GM12878 (cell line): ENCODE measurements at regions of chr15 and their contacts with region 1.

Region 1: DNA sequence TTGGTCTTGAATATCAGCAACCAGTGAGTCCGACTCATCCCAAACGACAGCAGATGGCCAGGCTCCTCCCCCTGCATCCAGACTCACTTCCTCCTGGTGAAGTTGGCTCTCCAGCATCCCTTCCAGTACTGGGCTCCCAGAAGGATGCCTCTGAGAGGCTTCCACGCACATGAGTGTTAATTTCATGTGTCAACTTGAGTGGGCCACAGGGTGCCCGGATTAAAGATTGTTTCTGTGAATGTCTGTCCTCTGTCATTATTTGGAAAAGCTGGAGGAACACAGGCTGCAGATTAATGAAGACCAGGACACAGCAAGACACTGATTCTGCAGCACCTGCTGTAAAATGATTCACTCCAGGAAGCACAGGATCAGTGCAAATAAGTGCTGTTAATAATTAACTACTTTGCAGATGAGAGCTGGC is 99.8 kb downstream of the ATP10A start:
- DNase-seq: no peak
- ATAC-seq: no peak
- H3K4me3 ChIP-seq: no peak overlapping the region
- H3K27ac ChIP-seq: no peak overlapping the region
- H3K4me1 ChIP-seq: no peaks in the 10 kb centered on the region
- H3K27me3 ChIP-seq: no peaks in the 10 kb centered on the region
- CTCF ChIP-seq: no peak
- EP300 ChIP-seq: no peak
- POLR2A ChIP-seq: no peak
- RAD21 ChIP-seq: no peak

Region 2: GRCh38 chr15:25616471-25616870 is 146.9 kb before region 1 on chr15:
- CTCF ChIA-PET with region 1: no interaction called
- POLR2A ChIA-PET with region 1: no interaction called
- RAD21 ChIA-PET with region 1: no interaction called
- SMC1A ChIA-PET with region 1: no interaction called
- in situ Hi-C with region 1: no loop called
- intact Hi-C with region 1: no loop called
- DNase-seq: no peak
- ATAC-seq: no peak
- H3K4me3 ChIP-seq: no peak overlapping the region
- H3K27ac ChIP-seq: no peak overlapping the region
- H3K4me1 ChIP-seq: no peaks in the 10 kb centered on the region
- H3K27me3 ChIP-seq: no peaks in the 10 kb centered on the region
- CTCF ChIP-seq: no peak
- EP300 ChIP-seq: no peak
- POLR2A ChIP-seq: no peak
- RAD21 ChIP-seq: no peak

Region 3: DNA sequence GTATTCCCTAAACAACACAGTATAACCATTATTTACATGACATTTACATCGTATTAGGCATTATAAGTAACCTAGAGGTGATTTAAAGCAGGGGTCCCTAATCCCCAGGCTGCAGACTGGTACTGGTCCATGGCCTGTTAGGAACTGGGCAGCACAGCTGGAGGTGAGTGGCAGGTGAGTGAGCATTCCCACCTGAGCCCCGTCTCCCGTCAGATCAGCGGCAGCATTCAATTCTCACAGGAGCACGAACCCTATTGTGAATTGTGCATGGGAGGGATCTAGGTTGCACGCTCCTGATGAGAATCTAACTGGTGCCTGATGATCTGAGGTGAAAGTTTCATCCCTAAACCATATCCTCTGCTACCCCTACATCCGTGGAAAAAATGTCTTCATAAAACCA is 38.4 kb before region 1 on chr15:
- CTCF ChIA-PET with region 1: no interaction called
- POLR2A ChIA-PET with region 1: no interaction called
- RAD21 ChIA-PET with region 1: no interaction called
- SMC1A ChIA-PET with region 1: no interaction called
- in situ Hi-C with region 1: loop called (anchors 5 kb)
- intact Hi-C with region 1: no loop called
- DNase-seq: no peak
- ATAC-seq: no peak
- H3K4me3 ChIP-seq: no peak overlapping the region
- H3K27ac ChIP-seq: no peak overlapping the region
- H3K4me1 ChIP-seq: no peaks in the 10 kb centered on the region
- H3K27me3 ChIP-seq: no peaks in the 10 kb centered on the region
- CTCF ChIP-seq: no peak
- EP300 ChIP-seq: no peak
- POLR2A ChIP-seq: no peak
- RAD21 ChIP-seq: no peak

Region 4: DNA sequence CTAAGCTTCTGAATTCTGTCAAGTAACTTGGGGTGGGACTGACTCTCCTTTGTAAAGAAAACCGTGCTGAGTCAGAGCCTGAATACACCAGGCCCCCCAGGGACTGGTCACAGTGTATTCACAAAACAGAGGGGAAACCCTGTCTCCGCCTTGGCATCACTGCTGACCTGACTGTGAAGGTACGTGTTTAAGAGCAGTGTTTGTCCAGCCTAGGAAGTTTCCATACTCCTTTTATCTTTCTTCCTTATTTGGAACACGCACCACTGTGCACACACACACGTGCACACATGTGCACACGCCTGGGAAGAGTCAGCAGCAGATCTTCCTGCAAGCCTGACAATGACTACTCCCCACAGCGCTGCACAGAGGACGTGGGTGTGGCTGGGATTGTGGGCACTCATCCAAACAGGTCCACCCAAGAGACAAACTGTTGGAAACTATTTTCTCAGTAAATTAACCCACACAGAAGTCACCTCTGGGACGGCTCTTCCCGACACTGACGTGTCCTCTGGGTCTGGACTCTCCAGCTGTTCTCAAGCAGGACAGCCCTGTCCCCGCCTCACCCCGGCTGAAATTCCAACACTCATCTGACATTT is 12.1 kb after region 1 on chr15:
- CTCF ChIA-PET with region 1: no interaction called
- POLR2A ChIA-PET with region 1: no interaction called
- RAD21 ChIA-PET with region 1: no interaction called
- SMC1A ChIA-PET with region 1: no interaction called
- in situ Hi-C with region 1: no loop called
- intact Hi-C with region 1: loop called (anchors 2 kb)
- DNase-seq: peak; percentile 40
- ATAC-seq: peak; percentile 96
- H3K4me3 ChIP-seq: no peak overlapping the region
- H3K27ac ChIP-seq: no peak overlapping the region
- H3K4me1 ChIP-seq: no peaks in the 10 kb centered on the region
- H3K27me3 ChIP-seq: no peaks in the 10 kb centered on the region
- CTCF ChIP-seq: no peak
- EP300 ChIP-seq: peak; percentile 76 to 78; a peak in 3 of 4 replicates
- POLR2A ChIP-seq: no peak
- RAD21 ChIP-seq: no peak

Region 5: DNA sequence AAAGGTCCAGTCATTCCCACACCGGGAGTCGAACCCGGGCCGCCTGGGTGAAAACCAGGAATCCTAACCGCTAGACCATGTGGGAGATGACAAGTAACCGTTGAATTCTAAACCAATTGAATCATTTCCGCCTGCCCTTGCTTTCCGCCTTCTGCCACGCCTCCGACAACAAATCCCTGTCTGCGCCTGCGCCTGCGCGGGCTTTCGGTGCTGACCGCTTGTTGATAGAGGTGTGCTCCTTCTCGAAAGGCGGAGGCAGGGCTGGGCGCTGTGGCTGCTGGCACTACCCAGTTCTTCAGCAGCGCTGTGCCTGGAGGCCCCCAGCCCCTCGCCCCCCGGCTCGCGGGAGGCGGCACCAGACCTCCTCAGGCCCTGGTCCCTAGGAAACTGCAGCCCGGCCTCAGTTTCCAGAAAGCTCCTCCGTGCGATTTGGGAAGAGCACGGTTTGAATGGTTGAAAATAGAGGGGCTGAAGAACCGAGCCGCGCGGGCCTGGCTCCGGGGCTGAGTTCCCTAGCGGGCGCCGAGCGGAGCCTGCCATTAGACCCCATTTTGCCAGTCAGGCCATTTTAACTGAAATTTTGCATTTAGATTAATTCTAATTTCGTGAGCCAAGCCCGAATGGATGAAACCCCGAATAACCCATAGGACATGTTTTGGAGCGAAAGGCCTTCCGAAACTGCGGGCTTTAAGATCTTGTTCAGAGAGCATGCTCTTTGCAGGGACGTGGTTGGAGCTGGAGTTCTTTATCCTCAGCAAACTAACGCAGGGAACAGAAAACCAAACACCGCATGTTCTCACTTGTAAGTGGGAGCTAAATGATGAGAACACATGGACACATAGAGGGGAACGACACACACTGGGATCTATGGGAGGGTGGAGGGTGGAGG is 319.1 kb after region 1 on chr15:
- CTCF ChIA-PET with region 1: no interaction called
- POLR2A ChIA-PET with region 1: no interaction called
- RAD21 ChIA-PET with region 1: no interaction called
- SMC1A ChIA-PET with region 1: no interaction called
- in situ Hi-C with region 1: loop called (anchors 25 kb)
- intact Hi-C with region 1: no loop called
- DNase-seq: peak; percentile 53
- ATAC-seq: peak; percentile 99
- H3K4me3 ChIP-seq: peak overlapping the region; percentile 40; the same call in 1 of the 2 replicates
- H3K27ac ChIP-seq: no peak overlapping the region
- H3K4me1 ChIP-seq: no peaks in the 10 kb centered on the region
- H3K27me3 ChIP-seq: no peaks in the 10 kb centered on the region
- CTCF ChIP-seq: no peak
- EP300 ChIP-seq: no peak
- POLR2A ChIP-seq: 0 out of 2 replicates have a peak, but pooled peaks have one; percentile 39
- RAD21 ChIP-seq: no peak